ENCODE measurements at regions of chr9 and their contacts with region 1.

Region 1: GRCh38 chr9:26975693-26976059 is 19.5 kb downstream of the IFT74 start:
- DNase-seq: no peak
- ATAC-seq: peak; percentile 52

Region 2: DNA sequence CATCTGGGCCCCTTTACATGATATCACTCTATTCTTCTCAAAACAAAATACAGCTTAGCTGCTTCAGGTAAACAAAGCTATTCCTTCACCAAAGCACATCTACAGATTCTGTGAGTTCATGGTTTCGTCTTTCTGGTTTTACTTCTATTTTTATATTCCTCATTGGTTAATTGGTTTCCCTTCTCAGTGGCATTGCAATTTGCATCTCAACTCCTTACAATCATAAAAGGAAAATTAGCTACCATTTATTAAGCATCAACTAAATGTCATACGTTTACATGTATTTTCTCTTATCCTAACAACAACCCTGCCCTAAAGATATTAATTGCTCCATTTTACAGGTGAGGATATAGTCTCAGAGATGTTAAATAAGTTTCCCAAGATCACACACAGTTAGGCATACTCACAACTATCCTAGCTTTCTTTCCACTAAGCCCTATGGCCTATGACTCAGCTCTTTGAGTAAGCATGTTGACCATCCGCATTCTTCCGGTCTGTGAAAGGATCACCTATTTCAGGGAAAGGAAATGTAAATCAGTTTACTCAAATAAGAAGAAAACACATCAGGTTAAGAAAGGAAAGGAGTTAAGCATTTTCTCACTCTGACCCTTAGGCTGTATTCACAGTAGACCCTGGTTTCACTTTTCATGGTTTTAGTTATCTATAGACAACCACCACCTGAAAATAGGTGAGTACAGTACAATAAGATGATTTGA is 229.2 kb before region 1 on chr9:
- intact Hi-C with region 1: loop called (anchors 5 kb)
- DNase-seq: no peak
- ATAC-seq: no peak

Measured in Right ventricle myocardium superior (tissue), 1 donor.